CD4-positive, alpha-beta memory T cell (primary cell): ENCODE measurements at regions of chr5 and their contacts with region 1.

Region 1: GRCh38 chr5:81751009-81751835 is at the start of gene SSBP2:
- DNase-seq: peak; percentile 99 to 100 (median 100)
- H3K4me3 ChIP-seq: peak within 1 kb of the TSS in 1 of 2 donors; percentile 68
- H3K4me3 Mint-ChIP-seq: peak within 1 kb of the TSS; percentile 94 to 97 (median 96)
- H3K27ac ChIP-seq: peak within 1 kb of the TSS; percentile 75
- H3K27ac Mint-ChIP-seq: peak within 1 kb of the TSS; percentile 95 to 98 (median 96)
- H3K4me1 ChIP-seq: peaks cover 20% of the 10 kb centered on the region
- H3K4me1 Mint-ChIP-seq: peaks cover 15 to 39% (median 32%) of the 10 kb centered on the region in 4 donors
- H3K27me3 ChIP-seq: no peaks in the 10 kb centered on the region
- H3K27me3 Mint-ChIP-seq: peaks cover 0 to 2% of the 10 kb centered on the region in 2 donors
- total RNA-seq, gene SSBP2: 54.4 to 63.3 TPM

Region 2: GRCh38 chr5:81513982-81514381 is 237.2 kb before region 1 on chr5:
- CTCF ChIA-PET with region 1: interaction called, 3 read pairs
- POLR2A ChIA-PET with region 1: interaction called, 7 read pairs
- intact Hi-C with region 1: loop called (anchors 2 kb)
- DNase-seq: peak in 4 of 5 donors; percentile 7 to 19 (median 12)
- H3K4me3 ChIP-seq: no peak overlapping the region
- H3K4me3 Mint-ChIP-seq: no peak overlapping the region
- H3K27ac ChIP-seq: no peak overlapping the region
- H3K27ac Mint-ChIP-seq: no peak overlapping the region
- H3K4me1 ChIP-seq: no peaks in the 10 kb centered on the region
- H3K4me1 Mint-ChIP-seq: peaks cover 0 to 3% (median under 1%) of the 10 kb centered on the region in 4 donors
- H3K27me3 ChIP-seq: no peaks in the 10 kb centered on the region
- H3K27me3 Mint-ChIP-seq: no peaks in the 10 kb centered on the region

Region 3: DNA sequence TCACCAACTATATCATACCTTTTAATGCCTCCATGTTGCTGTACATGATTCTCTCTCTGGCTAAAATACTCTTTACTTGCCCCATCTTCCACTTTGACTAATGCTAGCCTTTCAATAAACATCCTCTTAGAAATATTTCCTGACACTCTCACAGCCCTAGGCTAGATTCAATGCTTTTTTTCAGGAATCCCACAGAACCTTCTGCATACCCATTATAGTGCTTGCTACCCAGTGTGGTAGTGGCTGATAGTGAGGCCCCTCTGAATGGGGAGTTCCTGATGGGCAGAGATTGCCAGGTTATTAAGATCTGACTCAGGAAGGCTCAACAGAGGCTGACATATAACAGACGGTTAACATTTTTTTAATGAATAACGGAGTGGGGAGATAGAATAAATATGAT is 11.9 kb before region 1 on chr5:
- CTCF ChIA-PET with region 1: interaction called, 4 read pairs
- POLR2A ChIA-PET with region 1: interaction called, 15 read pairs
- intact Hi-C with region 1: no loop called
- DNase-seq: no peak
- H3K4me3 ChIP-seq: no peak overlapping the region
- H3K4me3 Mint-ChIP-seq: no peak overlapping the region
- H3K27ac ChIP-seq: no peak overlapping the region
- H3K27ac Mint-ChIP-seq: no peak overlapping the region
- H3K4me1 ChIP-seq: peaks cover 5% of the 10 kb centered on the region
- H3K4me1 Mint-ChIP-seq: peaks cover 26 to 35% (median 31%) of the 10 kb centered on the region in 4 donors
- H3K27me3 ChIP-seq: no peaks in the 10 kb centered on the region
- H3K27me3 Mint-ChIP-seq: no peaks in the 10 kb centered on the region

Region 4: GRCh38 chr5:81838307-81838906 is 87.2 kb after region 1 on chr5:
- CTCF ChIA-PET with region 1: interaction called, 16 read pairs
- POLR2A ChIA-PET with region 1: interaction called, 46 read pairs
- intact Hi-C with region 1: loop called (anchors 1 kb)
- DNase-seq: peak in 4 of 5 donors; percentile 33 to 45 (median 36)
- H3K4me3 ChIP-seq: no peak overlapping the region
- H3K4me3 Mint-ChIP-seq: peak overlapping the region in 1 of 8 donors; percentile 27
- H3K27ac ChIP-seq: no peak overlapping the region
- H3K27ac Mint-ChIP-seq: peak overlapping the region in 2 of 7 donors; percentile 58 to 67
- H3K4me1 ChIP-seq: no peaks in the 10 kb centered on the region
- H3K4me1 Mint-ChIP-seq: peaks cover 7 to 14% (median 9%) of the 10 kb centered on the region in 4 donors
- H3K27me3 ChIP-seq: no peaks in the 10 kb centered on the region
- H3K27me3 Mint-ChIP-seq: no peaks in the 10 kb centered on the region

Region 5: DNA sequence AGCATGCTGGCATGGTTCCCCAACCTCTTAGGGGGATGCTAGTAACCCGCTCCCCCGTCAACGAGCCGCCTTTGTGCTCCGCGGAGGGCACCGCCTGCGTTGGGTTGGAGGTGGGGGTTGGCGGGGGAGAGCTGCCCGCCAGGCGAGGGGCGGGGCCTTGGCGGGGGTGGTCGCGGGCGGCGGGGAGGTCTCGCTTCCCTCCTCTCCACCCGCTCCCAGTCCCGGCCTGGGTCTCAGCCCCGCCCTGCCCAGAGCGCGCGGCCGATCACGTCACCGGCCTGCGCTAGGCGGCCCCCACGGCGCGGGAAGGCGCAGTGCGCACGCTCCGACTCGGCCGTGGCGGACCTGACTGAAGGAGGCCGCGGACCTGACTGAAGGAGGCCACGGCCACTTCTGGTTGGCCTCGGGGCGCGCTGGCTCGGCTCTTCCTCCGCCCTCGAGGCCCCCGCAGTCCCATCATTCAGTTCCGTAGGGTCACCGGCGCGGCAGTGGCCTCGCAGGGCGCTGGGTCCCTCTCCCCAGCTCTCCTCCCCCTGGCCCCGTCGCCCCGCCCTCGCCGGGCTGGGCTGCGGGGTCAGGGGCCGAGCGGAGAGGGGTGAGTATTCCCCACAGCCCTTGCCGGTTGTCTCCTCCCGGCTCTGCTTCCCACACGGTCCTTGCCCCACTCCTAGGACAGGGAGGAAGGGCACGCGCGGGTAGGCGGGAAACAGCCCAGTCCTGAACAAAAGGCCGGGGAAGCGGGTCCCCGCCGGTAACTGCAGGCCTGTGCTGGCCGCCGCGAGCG is 220.7 kb after region 1 on chr5 and contains the start of gene ATG10:
- CTCF ChIA-PET with region 1: interaction called, 3 read pairs
- POLR2A ChIA-PET with region 1: interaction called, 29 read pairs
- intact Hi-C with region 1: loop called (anchors 1 kb)
- DNase-seq: peak; percentile 80 to 88 (median 86)
- H3K4me3 ChIP-seq: peak within 1 kb of the TSS; percentile 88 to 94
- H3K4me3 Mint-ChIP-seq: peak within 1 kb of the TSS; percentile 87 to 100 (median 98)
- H3K27ac ChIP-seq: peak within 1 kb of the TSS; percentile 93
- H3K27ac Mint-ChIP-seq: peak within 1 kb of the TSS; percentile 96 to 100 (median 99)
- H3K4me1 ChIP-seq: peaks cover 24% of the 10 kb centered on the region
- H3K4me1 Mint-ChIP-seq: peaks cover 8 to 31% (median 22%) of the 10 kb centered on the region in 4 donors
- H3K27me3 ChIP-seq: no peaks in the 10 kb centered on the region
- H3K27me3 Mint-ChIP-seq: no peaks in the 10 kb centered on the region
- total RNA-seq, gene ATG10: 7.5 to 7.9 TPM

Region 6: DNA sequence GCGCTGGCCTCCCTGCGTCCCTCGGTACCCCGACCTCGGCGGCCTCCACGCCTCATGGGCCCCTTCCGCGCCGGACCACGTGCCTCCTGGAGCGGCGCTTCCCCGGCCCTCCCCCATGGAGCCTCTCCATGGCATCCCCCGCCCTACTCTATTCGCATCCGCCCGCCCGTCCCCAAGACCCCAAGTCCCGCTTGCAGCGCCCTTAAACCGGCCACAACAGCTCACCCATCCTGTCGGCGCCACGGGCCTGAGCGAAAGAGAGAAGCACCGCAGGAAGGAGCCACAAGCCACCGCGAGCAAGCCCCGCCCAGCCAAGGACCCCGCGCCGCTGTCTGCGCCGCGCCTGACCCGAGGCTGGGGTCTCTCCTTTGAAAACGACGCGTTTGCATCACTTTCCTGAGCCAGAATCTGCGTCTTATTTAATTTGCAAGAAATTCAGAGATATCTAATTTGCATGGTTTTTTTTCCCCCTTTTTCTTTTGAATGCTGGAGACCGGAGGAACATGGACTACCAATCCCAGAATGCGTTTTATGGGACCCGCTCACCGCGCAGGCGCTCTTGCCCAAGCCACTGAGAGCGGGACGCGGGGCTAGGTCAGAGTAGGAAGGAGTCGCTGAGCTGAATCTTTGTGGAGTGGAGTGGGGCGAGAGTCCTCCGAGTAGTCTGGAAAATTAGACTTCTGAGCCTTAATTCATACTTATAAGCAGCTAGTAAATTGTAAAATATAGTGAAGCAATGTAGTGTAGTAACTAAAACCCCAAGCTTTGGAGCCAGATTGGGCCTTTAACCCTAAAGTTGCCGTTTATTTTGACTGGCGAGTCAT is 527.1 kb after region 1 on chr5 and contains the start of gene RPS23:
- CTCF ChIA-PET with region 1: no interaction called
- POLR2A ChIA-PET with region 1: interaction called, 15 read pairs
- intact Hi-C with region 1: loop called (anchors 1 kb)
- DNase-seq: peak; percentile 86 to 89 (median 88)
- H3K4me3 ChIP-seq: peak within 1 kb of the TSS; percentile 84 to 93
- H3K4me3 Mint-ChIP-seq: peak within 1 kb of the TSS; percentile 86 to 99 (median 96)
- H3K27ac ChIP-seq: peak within 1 kb of the TSS; percentile 79
- H3K27ac Mint-ChIP-seq: peak within 1 kb of the TSS; percentile 94 to 99 (median 98)
- H3K4me1 ChIP-seq: peaks cover 23% of the 10 kb centered on the region
- H3K4me1 Mint-ChIP-seq: peaks cover 15 to 48% (median 30%) of the 10 kb centered on the region in 4 donors
- H3K27me3 ChIP-seq: no peaks in the 10 kb centered on the region
- H3K27me3 Mint-ChIP-seq: no peaks in the 10 kb centered on the region
- total RNA-seq, gene RPS23: 2,959 to 3,147 TPM